ENCODE measurements at regions of chr4 and their contacts with region 1.

Region 1: DNA sequence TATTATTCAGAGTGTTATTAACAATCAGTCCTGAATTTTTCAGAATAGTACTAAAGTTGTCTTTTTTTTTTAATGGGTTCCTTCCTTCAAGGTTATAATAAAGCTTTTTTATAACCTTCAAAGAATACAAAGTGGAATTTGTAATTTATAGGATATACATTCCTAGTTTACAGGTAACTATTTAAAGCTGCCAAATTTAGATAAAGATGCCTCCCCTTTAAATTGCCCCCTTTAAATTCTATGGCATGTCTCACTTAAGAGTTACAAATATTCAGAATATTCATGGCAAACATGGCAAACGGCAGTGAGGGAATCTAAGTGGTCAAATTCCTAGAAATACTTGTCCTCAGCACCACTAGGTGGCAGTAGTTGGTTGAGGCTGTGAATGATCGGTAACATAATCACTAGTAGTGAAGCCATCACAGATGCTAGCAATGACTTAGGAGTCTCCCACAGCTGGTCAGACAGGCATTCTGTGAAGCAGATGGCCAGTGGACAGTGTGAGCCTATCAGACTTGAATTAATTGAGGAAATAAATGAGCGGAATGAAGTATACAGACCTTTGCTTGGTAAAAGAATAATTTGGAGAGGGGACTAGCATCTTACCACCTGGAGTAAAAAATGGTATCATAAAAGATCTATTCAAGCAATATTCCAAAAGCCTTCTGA is 86.4 kb downstream of the CBR4 start:
- DNase-seq: peak; percentile 31
- ATAC-seq: peak; percentile 91
- H3K4me3 ChIP-seq: no peak overlapping the region
- H3K27ac ChIP-seq: no peak overlapping the region
- H3K4me1 ChIP-seq: no peaks in the 10 kb centered on the region
- H3K27me3 ChIP-seq: no peaks in the 10 kb centered on the region
- CTCF ChIP-seq: peak; percentile 68 to 73 (median 69); a peak in 5 of 6 replicates
- EP300 ChIP-seq: no peak
- POLR2A ChIP-seq: no peak
- RAD21 ChIP-seq: peak; percentile 84

Region 2: GRCh38 chr4:168585168-168586091 is 338.2 kb before region 1 on chr4:
- CTCF ChIA-PET with region 1: interaction called, 108 read pairs
- POLR2A ChIA-PET with region 1: interaction called, 3 read pairs
- RAD21 ChIA-PET with region 1: interaction called, 52 read pairs
- SMC1A ChIA-PET with region 1: interaction called, 65 read pairs
- in situ Hi-C with region 1: loop called (anchors 5 kb)
- intact Hi-C with region 1: loop called (anchors 2 kb)
- DNase-seq: no peak
- ATAC-seq: peak; percentile 98
- H3K4me3 ChIP-seq: no peak overlapping the region
- H3K27ac ChIP-seq: no peak overlapping the region
- H3K4me1 ChIP-seq: no peaks in the 10 kb centered on the region
- H3K27me3 ChIP-seq: no peaks in the 10 kb centered on the region
- CTCF ChIP-seq: peak; percentile 38 to 63 (median 63); a peak in 5 of 6 replicates
- EP300 ChIP-seq: no peak
- POLR2A ChIP-seq: no peak
- RAD21 ChIP-seq: peak; percentile 47

Region 3: DNA sequence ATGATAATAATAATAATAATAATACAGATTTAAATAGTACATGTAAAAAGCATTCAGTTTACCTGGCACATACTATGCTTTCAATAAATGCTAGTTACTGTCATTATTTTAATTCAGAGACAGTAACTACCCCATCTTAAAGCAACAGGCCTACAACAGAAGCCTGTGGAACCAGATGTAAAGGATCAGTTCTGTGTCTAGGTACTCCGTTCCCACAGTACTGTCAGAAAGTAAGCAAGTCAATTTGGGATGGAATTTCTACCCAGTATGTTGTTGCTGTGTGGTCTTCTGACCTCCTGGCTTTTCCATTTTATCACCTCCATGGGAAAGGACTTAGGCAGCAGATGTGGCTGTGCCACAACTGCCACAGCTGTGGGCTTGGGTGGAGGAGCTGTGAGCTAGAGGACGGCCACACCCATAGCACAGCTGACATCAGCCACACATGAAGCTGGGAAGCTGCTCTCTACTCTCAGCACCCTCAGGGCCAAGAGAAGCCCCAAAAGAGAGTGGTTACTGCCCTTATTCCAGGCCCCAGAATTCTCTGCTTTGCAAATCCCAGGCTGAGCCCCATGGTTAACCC is 16.5 kb before region 1 on chr4:
- CTCF ChIA-PET with region 1: interaction called, 13 read pairs
- POLR2A ChIA-PET with region 1: no interaction called
- RAD21 ChIA-PET with region 1: interaction called, 3 read pairs
- SMC1A ChIA-PET with region 1: interaction called, 15 read pairs
- in situ Hi-C with region 1: no loop called
- intact Hi-C with region 1: no loop called
- DNase-seq: no peak
- ATAC-seq: no peak
- H3K4me3 ChIP-seq: no peak overlapping the region
- H3K27ac ChIP-seq: no peak overlapping the region
- H3K4me1 ChIP-seq: no peaks in the 10 kb centered on the region
- H3K27me3 ChIP-seq: no peaks in the 10 kb centered on the region
- CTCF ChIP-seq: no peak
- EP300 ChIP-seq: no peak
- POLR2A ChIP-seq: no peak
- RAD21 ChIP-seq: no peak

Region 4: DNA sequence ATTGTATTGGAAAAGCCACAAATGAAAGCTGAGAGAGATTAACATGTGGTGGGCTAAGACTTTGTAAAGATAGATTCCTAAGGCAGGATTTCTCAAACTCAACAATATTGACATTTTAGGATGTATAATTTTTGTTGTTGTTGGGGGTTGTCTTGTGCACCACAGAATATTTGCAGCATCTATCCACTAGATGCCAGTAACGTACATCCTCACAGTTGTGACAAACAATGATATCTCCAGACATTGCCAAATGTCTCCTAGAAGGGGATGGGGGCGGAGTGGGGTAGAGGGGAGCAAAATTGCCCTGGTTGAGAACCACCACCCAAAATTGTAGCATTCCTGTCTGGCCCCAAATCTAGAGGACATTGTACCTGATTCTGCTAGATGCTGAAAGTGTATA is 101.1 kb after region 1 on chr4:
- CTCF ChIA-PET with region 1: interaction called, 44 read pairs
- POLR2A ChIA-PET with region 1: no interaction called
- RAD21 ChIA-PET with region 1: interaction called, 5 read pairs
- SMC1A ChIA-PET with region 1: interaction called, 18 read pairs
- in situ Hi-C with region 1: no loop called
- intact Hi-C with region 1: no loop called
- DNase-seq: no peak
- ATAC-seq: peak; percentile 97
- H3K4me3 ChIP-seq: no peak overlapping the region
- H3K27ac ChIP-seq: no peak overlapping the region
- H3K4me1 ChIP-seq: no peaks in the 10 kb centered on the region
- H3K27me3 ChIP-seq: no peaks in the 10 kb centered on the region
- CTCF ChIP-seq: peak; percentile 63 to 77 (median 65)
- EP300 ChIP-seq: no peak
- POLR2A ChIP-seq: no peak
- RAD21 ChIP-seq: peak; percentile 94

Region 5: GRCh38 chr4:169566021-169566818 is 642.6 kb after region 1 on chr4:
- CTCF ChIA-PET with region 1: interaction called, 59 read pairs
- POLR2A ChIA-PET with region 1: no interaction called
- RAD21 ChIA-PET with region 1: interaction called, 7 read pairs
- SMC1A ChIA-PET with region 1: interaction called, 30 read pairs
- in situ Hi-C with region 1: loop called (anchors 5 kb)
- intact Hi-C with region 1: loop called (anchors 1 kb)
- DNase-seq: no peak
- ATAC-seq: peak; percentile 92
- H3K4me3 ChIP-seq: no peak overlapping the region
- H3K27ac ChIP-seq: no peak overlapping the region
- H3K4me1 ChIP-seq: no peaks in the 10 kb centered on the region
- H3K27me3 ChIP-seq: no peaks in the 10 kb centered on the region
- CTCF ChIP-seq: peak; percentile 47 to 69 (median 61); a peak in 5 of 6 replicates
- EP300 ChIP-seq: no peak
- POLR2A ChIP-seq: no peak
- RAD21 ChIP-seq: peak; percentile 73

Measured in GM12878 (cell line).